Common myeloid progenitor, CD34-positive (primary cell): ENCODE measurements at regions of chr19 and their contacts with region 1.

Region 1: GRCh38 chr19:14117668-14118164 is at the start of gene PRKACA:
- DNase-seq: peak; percentile 99
- H3K4me3 ChIP-seq: peak within 1 kb of the TSS; percentile 61 to 86 (median 73)
- H3K27ac ChIP-seq: peak within 1 kb of the TSS; percentile 54 to 88
- H3K4me1 ChIP-seq: peaks cover 7 to 61% (median 31%) of the 10 kb centered on the region in 4 experiments
- H3K27me3 ChIP-seq: no peaks in the 10 kb centered on the region

Region 2: GRCh38 chr19:14073261-14073924 is 44.3 kb before region 1 on chr19:
- CTCF ChIA-PET with region 1: interaction called, 18 read pairs
- POLR2A ChIA-PET with region 1: no interaction called
- DNase-seq: peak; percentile 76 to 86 (median 86)
- H3K4me3 ChIP-seq: peak overlapping the region; percentile 58 to 83 (median 75)
- H3K27ac ChIP-seq: peak overlapping the region in 1 of 2 experiments; percentile 54
- H3K4me1 ChIP-seq: peaks cover 5 to 44% (median 38%) of the 10 kb centered on the region in 4 experiments
- H3K27me3 ChIP-seq: no peaks in the 10 kb centered on the region

Region 3: GRCh38 chr19:14091081-14091812 is 26.5 kb before region 1 on chr19:
- CTCF ChIA-PET with region 1: interaction called, 25 read pairs
- POLR2A ChIA-PET with region 1: interaction called, 4 read pairs
- DNase-seq: peak; percentile 89 to 93 (median 92)
- H3K4me3 ChIP-seq: peak overlapping the region; percentile 76 to 86 (median 81)
- H3K27ac ChIP-seq: peak overlapping the region; percentile 46 to 80
- H3K4me1 ChIP-seq: peaks cover 0 to 18% (median 17%) of the 10 kb centered on the region in 4 experiments
- H3K27me3 ChIP-seq: no peaks in the 10 kb centered on the region

Region 4: DNA sequence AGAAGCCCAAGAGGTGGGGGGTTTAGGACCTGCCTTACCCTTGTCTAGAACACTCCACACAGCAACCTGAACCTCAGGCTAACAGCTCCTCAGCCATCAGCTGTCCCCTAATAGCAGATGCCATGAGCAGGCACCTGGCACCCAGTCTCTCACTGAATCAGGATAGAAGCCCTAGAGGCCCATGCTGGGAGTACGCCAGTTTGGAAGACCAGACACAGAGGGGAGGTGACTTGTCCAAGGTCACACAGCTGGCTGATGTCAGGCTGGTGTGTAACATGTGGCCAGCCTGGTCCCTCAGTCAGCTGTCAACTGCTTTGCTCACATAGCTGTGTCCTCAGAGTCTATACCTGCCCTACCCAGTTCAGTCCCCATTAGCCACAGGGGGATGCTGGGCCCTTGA is 14.4 kb before region 1 on chr19:
- CTCF ChIA-PET with region 1: interaction called, 22 read pairs
- POLR2A ChIA-PET with region 1: no interaction called
- DNase-seq: no peak
- H3K4me3 ChIP-seq: no peak overlapping the region
- H3K27ac ChIP-seq: no peak overlapping the region
- H3K4me1 ChIP-seq: no peaks in the 10 kb centered on the region
- H3K27me3 ChIP-seq: no peaks in the 10 kb centered on the region